ENCODE measurements at regions of chr1 and their contacts with region 1.

Region 1: GRCh38 chr1:169694304-169695075 is 16.9 kb downstream of the SELL start:
- DNase-seq: peak in 7 of 9 donors; percentile 63 to 85 (median 76)
- ATAC-seq: peak; percentile 71
- H3K4me3 ChIP-seq: peak overlapping the region; percentile 18
- H3K4me3 Mint-ChIP-seq: peak overlapping the region in 9 of 10 donors; percentile 21 to 86 (median 71)
- H3K27ac ChIP-seq: peak overlapping the region; percentile 70
- H3K27ac Mint-ChIP-seq: peak overlapping the region in 4 of 9 donors; percentile 86 to 98 (median 94)
- H3K4me1 ChIP-seq: peaks cover 91 to 92% of the 10 kb centered on the region in 2 donors
- H3K4me1 Mint-ChIP-seq: peaks cover 0 to 89% (median 74%) of the 10 kb centered on the region in 7 donors
- H3K27me3 ChIP-seq: no peaks in the 10 kb centered on the region
- H3K27me3 Mint-ChIP-seq: no peaks in the 10 kb centered on the region

Region 2: GRCh38 chr1:169106095-169106920 is 588.2 kb before region 1 on chr1 and contains the start of gene ATP1B1:
- CTCF ChIA-PET with region 1: no interaction called
- POLR2A ChIA-PET with region 1: no interaction called
- intact Hi-C with region 1: loop called in 1 of 2 experiments (anchors 10 kb)
- DNase-seq: peak; percentile 66 to 90 (median 76)
- ATAC-seq: peak; percentile 95
- H3K4me3 ChIP-seq: peak within 1 kb of the TSS; percentile 67
- H3K4me3 Mint-ChIP-seq: peak within 1 kb of the TSS; percentile 81 to 93 (median 88)
- H3K27ac ChIP-seq: peak within 1 kb of the TSS; percentile 58
- H3K27ac Mint-ChIP-seq: peak within 1 kb of the TSS in 8 of 9 donors; percentile 29 to 85 (median 56)
- H3K4me1 ChIP-seq: peaks cover 7 to 21% of the 10 kb centered on the region in 2 donors
- H3K4me1 Mint-ChIP-seq: peaks cover 24 to 48% (median 40%) of the 10 kb centered on the region in 7 donors
- H3K27me3 ChIP-seq: no peaks in the 10 kb centered on the region
- H3K27me3 Mint-ChIP-seq: peaks cover 0 to 19% (median 0%) of the 10 kb centered on the region in 5 donors
- total RNA-seq, gene ATP1B1: 1.8 to 10.6 (median 2.3) TPM

Region 3: DNA sequence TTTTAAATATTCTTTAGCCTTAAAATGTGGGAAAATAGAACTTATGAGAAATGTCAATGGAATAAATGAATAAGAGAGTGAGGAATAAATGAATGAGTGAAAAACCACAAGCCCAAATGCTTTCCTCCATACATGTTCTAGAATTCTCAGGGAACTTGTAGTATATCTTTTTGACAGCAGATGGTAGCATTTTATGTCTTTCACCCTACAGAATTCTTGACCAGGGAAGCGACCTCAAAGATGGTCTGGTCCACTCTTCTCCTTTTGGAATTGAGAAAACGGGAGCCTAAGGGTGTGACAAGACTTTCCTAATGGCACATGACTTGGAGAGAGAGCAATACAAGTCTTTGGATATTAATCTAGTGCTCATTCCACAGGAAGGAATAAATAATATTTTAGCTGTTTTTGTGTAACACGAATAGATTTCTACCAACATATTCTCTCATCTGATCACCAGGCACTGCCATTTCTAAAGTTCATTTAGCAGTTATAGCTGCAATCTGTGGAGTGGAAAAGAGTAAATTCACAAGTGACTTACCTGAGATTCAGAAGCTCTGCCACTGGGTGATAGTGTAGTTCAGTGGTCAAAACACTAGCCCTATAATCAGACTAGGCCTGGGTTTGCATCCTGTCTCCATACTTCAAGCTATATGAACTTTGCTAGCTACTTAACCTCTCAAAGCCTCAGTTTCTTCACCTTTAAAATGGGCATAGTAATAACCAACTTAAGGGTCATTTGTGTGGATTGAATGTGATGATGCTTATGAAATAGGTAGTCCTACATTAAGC is 93.2 kb before region 1 on chr1:
- CTCF ChIA-PET with region 1: interaction called, 229 read pairs
- POLR2A ChIA-PET with region 1: interaction called, 159 read pairs
- intact Hi-C with region 1: loop called (anchors 1 kb)
- DNase-seq: peak in 6 of 9 donors; percentile 17 to 51 (median 36)
- ATAC-seq: no peak
- H3K4me3 ChIP-seq: no peak overlapping the region
- H3K4me3 Mint-ChIP-seq: peak overlapping the region in 6 of 10 donors; percentile 38 to 79 (median 54)
- H3K27ac ChIP-seq: peak overlapping the region; percentile 61
- H3K27ac Mint-ChIP-seq: peak overlapping the region; percentile 47 to 96 (median 89)
- H3K4me1 ChIP-seq: peaks cover 17 to 49% of the 10 kb centered on the region in 2 donors
- H3K4me1 Mint-ChIP-seq: peaks cover 43 to 58% (median 55%) of the 10 kb centered on the region in 7 donors
- H3K27me3 ChIP-seq: no peaks in the 10 kb centered on the region
- H3K27me3 Mint-ChIP-seq: peaks cover 0 to 2% (median 0%) of the 10 kb centered on the region in 5 donors

Region 4: DNA sequence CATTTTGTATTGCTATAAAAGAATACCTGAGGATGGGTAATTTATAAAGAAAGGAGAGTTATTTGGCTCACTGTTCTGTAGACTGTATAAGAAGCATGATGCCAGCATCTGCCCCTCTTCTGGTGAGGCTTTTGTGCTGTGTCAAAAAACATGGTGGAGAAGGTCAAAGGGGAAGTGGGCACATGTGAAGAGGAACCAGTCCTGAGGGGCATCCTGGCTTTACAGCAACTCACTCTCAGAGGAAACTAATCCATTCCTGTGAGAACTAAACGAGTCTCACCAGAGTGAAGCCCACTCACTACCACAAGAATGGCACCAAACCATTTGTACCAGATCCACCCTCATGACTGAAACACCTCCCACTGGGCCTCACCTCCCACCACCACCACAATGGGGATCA is 45.8 kb before region 1 on chr1:
- CTCF ChIA-PET with region 1: interaction called, 4 read pairs
- POLR2A ChIA-PET with region 1: interaction called, 4 read pairs
- intact Hi-C with region 1: loop called in 1 of 2 experiments (anchors 1 kb)
- DNase-seq: no peak
- ATAC-seq: no peak
- H3K4me3 ChIP-seq: no peak overlapping the region
- H3K4me3 Mint-ChIP-seq: peak overlapping the region in 8 of 10 donors; percentile 10 to 74 (median 62)
- H3K27ac ChIP-seq: peak overlapping the region; percentile 17
- H3K27ac Mint-ChIP-seq: peak overlapping the region in 8 of 9 donors; percentile 65 to 94 (median 88)
- H3K4me1 ChIP-seq: peaks cover 14 to 28% of the 10 kb centered on the region in 2 donors
- H3K4me1 Mint-ChIP-seq: peaks cover 18 to 55% (median 46%) of the 10 kb centered on the region in 7 donors
- H3K27me3 ChIP-seq: no peaks in the 10 kb centered on the region
- H3K27me3 Mint-ChIP-seq: no peaks in the 10 kb centered on the region

Region 5: DNA sequence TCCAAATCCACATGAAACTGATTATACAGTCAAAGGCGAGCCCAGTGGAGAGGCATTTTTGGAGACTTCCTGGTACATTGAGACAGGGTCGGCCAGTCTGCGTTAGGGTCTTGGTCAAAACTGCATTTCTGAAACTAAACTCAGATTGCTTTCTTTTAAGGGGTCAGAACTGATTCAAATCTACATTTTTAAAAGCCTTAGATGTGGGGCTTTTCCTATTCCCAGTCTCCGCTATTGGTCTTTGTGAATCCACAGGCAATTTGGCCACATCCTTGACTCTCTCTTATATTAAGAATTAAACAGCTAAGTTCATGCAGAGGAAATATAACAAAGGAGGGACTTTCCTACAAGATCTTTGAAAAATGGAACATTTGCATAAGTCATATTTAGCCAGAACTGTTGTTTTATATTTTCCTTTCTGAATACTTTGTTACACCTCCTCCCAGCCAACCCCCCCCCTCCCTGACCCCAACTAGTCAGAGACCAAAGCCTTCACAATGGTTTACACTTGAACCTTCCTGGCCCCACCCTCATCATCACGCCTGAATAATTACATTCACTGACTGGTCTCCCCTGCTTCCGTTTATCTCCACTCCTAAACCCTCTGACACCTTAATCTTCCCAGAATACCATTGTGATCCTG is 14.0 kb before region 1 on chr1:
- CTCF ChIA-PET with region 1: interaction called, 6 read pairs
- POLR2A ChIA-PET with region 1: interaction called, 138 read pairs
- intact Hi-C with region 1: loop called (anchors 1 kb)
- DNase-seq: peak in 1 of 9 donors; percentile 38
- ATAC-seq: peak; percentile 49
- H3K4me3 ChIP-seq: no peak overlapping the region
- H3K4me3 Mint-ChIP-seq: peak overlapping the region; percentile 23 to 72 (median 53)
- H3K27ac ChIP-seq: no peak overlapping the region
- H3K27ac Mint-ChIP-seq: peak overlapping the region in 7 of 9 donors; percentile 40 to 89 (median 73)
- H3K4me1 ChIP-seq: peaks cover 24 to 72% of the 10 kb centered on the region in 2 donors
- H3K4me1 Mint-ChIP-seq: peaks cover 28 to 64% (median 39%) of the 10 kb centered on the region in 7 donors
- H3K27me3 ChIP-seq: no peaks in the 10 kb centered on the region
- H3K27me3 Mint-ChIP-seq: no peaks in the 10 kb centered on the region

Measured in naive thymus-derived CD4-positive, alpha-beta T cell (primary cell).